Spleen (tissue), 13 donors: ENCODE measurements at regions of chr1 and their contacts with region 1.

Region 1: DNA sequence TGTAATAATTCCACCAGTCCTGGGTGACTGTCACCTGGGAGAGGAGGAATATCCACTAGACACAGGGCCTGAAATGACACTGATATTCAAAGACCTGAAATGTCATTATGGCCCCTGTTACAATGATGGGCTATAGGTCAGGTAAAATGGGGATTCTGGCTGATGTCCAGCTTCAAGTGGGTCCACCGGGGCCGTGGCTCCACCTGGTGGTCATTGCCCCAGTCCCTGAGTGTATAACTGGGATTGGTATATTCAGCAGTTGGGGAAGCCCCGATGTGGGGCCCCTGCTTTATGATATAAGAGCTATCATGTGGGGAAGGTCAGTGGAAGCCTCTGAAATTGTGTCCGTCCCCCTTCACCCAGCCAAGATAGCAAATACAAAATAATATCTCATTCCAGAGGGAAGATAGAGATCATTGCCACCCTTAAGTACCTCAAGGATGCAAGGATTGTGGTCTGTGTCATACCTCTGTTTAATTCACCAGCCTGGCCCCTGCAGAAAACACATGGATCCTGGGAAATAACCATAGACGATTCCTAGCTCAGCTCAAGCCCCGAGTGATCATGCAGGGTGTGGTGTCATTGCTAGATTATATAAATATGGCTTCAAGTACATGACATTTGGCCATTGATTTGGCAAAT is 19.4 kb downstream of the PLEKHO1 start:
- DNase-seq: peak; percentile 90
- H3K4me3 ChIP-seq: no peak overlapping the region
- H3K27ac ChIP-seq: no peak overlapping the region
- H3K4me1 ChIP-seq: peaks cover 17 to 46% (median 31%) of the 10 kb centered on the region in 6 donors
- H3K27me3 ChIP-seq: no peaks in the 10 kb centered on the region
- CTCF ChIP-seq: peak; percentile 49 to 84 (median 77)
- POLR2A ChIP-seq: no peak

Region 2: GRCh38 chr1:150072959-150073358 is 96.1 kb before region 1 on chr1:
- intact Hi-C with region 1: loop called (anchors 2 kb)
- DNase-seq: no peak
- H3K4me3 ChIP-seq: no peak overlapping the region
- H3K27ac ChIP-seq: no peak overlapping the region
- H3K4me1 ChIP-seq: peaks cover 0 to 45% (median 16%) of the 10 kb centered on the region in 6 donors
- H3K27me3 ChIP-seq: no peaks in the 10 kb centered on the region
- CTCF ChIP-seq: peak; percentile 37 to 76 (median 58)
- POLR2A ChIP-seq: no peak

Region 3: GRCh38 chr1:150961799-150962198 is 792.7 kb after region 1 on chr1:
- intact Hi-C with region 1: no loop called
- DNase-seq: no peak
- H3K4me3 ChIP-seq: no peak overlapping the region
- H3K27ac ChIP-seq: peak overlapping the region in 1 of 8 donors; percentile 34
- H3K4me1 ChIP-seq: peaks cover 0 to 17% (median 2%) of the 10 kb centered on the region in 6 donors
- H3K27me3 ChIP-seq: no peaks in the 10 kb centered on the region
- CTCF ChIP-seq: no peak
- POLR2A ChIP-seq: no peak